Posterior vena cava (tissue), 2 donors: ENCODE measurements at regions of chr7 and their contacts with region 1.

Region 1: DNA sequence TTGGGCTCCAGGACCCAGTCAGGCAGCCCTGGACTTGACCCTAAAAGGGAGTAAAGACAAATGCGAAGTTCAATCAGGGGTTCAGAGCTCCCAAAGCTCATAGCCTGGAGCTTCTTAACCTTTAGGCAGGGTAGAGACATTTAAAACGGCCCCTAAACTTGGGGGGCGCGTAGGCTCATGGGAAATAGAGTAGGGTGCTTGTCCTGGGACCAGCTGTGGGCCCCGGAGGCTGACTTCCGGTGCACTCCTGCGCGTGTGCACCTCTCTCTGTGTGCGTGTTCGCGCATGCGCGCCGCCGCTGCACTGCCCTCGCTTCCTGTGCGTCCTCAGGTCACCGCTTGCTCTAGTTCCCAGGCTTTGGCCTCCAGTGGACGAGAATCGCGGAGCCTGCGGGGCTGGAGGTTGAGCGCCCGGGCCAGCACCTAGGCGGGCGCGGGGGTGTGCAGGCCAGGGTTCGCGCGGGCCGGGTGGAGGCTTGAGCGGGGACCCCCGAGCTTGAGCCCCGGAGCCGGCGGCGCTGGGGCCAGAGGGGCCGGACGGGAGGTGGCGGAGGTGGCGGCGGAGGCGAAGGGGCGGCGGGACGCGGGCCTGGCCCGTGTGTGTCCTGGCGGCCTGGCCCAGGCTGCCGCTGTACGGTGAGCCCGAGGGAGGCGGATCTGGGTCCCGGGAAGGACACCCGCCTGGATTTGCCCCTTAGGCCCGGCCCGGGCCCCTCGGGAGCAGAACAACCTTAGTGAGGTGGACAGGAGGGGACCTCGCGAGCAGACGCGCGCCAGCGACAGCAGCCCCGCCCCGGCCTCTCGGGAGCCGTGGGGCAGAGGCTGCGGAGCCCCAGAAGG is at the start of gene RBAK:
- DNase-seq: peak; percentile 98
- total RNA-seq, gene RBAK: 10.9 to 12.6 TPM

Region 2: GRCh38 chr7:5620459-5620881 is 574.7 kb after region 1 on chr7:
- intact Hi-C with region 1: loop called in 1 of 2 experiments (anchors 5 kb)
- DNase-seq: no peak